ENCODE measurements at regions of chr20 and their contacts with region 1.

Region 1: DNA sequence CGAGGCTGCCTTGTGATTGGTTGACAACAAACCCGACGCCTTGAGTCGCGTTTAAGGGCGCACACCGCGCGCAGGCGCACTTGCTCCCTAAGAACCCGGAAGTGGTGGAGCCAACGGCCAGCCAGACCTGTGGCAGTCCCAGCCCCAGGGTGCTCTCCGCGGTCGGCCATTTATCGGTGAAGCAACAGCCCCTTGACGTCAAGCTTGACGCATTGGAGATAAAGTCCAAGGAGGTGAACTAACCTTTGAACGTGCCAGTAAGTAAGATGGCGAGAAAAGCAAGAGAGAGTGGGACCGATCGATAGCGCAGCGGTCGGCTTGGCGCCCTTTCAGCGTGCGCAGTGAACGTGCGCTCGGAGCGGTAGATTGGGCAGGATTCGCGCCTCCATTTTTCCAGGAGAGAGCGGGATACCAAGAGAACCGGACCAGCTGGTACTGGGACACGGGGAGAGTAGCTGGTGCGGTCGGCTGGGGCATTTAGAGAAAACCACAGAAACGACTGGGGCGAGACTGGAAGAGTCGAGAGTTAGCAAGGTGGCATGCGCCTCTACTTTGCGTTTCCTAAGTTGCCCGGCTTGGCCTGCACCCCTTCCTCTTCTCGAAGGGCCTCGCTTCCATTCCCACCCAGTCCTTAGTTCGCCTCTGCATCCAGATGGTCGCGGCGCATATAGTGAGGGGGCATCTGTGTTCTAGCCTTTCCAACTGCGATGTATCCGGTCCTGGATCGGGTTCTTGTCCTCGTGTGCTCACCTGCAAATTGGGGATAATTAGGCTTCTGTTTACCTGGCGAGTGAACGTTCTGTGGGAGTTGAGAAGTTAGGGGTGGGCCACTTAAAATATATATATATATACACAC is at the start of gene CSTF1:
- DNase-seq: peak; percentile 97 to 99 (median 99)
- ATAC-seq: peak; percentile 90 to 91
- H3K4me3 Mint-ChIP-seq: no peak within 1 kb of the TSS
- H3K27ac Mint-ChIP-seq: peak within 1 kb of the TSS in 1 of 10 donors; percentile 90
- H3K4me1 Mint-ChIP-seq: peaks cover 16 to 32% (median 24%) of the 10 kb centered on the region in 4 donors
- H3K27me3 Mint-ChIP-seq: no peaks in the 10 kb centered on the region
- polyA plus RNA-seq, gene CSTF1: 27.2 to 33.3 (median 27.7) TPM

Region 2: DNA sequence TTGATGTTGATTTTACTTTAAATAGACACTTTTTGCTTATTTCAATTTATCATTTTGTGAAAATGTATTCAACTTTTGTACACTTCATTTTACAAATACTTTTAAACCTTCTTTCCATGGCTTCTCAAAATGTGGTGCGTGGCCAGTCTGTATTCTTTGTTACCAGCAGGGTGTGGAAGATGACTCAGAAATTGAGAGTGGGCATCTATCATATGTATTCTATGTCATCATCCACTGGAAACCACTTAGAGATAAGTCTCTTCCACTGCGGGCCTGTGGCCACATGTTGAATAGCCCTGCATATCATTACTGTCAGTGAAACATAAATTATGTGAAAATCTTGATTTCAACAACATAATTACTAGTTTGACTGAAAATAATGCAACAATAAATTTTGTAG is 196.6 kb before region 1 on chr20:
- POLR2A ChIA-PET with region 1: no interaction called
- DNase-seq: no peak
- ATAC-seq: no peak
- H3K4me3 Mint-ChIP-seq: no peak overlapping the region
- H3K27ac Mint-ChIP-seq: no peak overlapping the region
- H3K4me1 Mint-ChIP-seq: no peaks in the 10 kb centered on the region
- H3K27me3 Mint-ChIP-seq: peaks cover 0 to 11% (median 2%) of the 10 kb centered on the region in 5 donors

Region 3: DNA sequence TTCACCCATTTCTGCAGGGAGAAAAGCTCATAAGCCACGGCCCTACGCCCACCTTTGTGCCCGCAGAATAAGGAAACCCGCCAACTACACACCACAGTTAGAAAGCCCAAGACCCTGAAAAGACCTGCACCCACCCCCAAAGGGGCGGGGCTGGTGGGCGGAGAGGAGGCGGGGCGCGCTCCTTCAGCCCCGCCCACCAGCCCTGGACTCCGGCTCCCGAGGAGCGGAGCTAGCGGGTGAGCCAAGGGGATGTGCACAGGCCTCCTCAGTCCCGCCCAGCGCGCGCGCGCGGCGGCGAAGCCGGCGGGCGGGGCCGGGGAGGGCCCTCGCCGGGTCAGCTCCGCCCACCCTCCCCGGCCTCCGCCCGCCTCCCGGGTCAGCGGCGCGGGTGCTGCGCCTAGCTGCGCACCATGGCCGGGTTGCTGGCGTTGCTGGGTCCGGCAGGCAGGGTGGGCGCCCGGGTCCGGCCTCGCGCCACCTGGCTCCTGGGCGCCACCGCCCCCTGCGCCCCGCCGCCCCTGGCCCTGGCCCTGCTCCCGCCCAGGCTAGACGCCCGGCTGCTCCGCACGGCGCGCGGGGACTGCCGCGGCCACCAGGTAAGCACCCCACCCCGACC is 33.8 kb before region 1 on chr20 and contains the start of gene FAM210B:
- POLR2A ChIA-PET with region 1: interaction called, 34 read pairs
- DNase-seq: peak; percentile 63 to 89 (median 76)
- ATAC-seq: peak; percentile 98
- H3K4me3 Mint-ChIP-seq: peak within 1 kb of the TSS; percentile 80 to 95 (median 92)
- H3K27ac Mint-ChIP-seq: peak within 1 kb of the TSS in 9 of 10 donors; percentile 65 to 92 (median 84)
- H3K4me1 Mint-ChIP-seq: peaks cover 8 to 27% (median 17%) of the 10 kb centered on the region in 4 donors
- H3K27me3 Mint-ChIP-seq: peaks cover 0 to 3% (median 0%) of the 10 kb centered on the region in 5 donors
- polyA plus RNA-seq, gene FAM210B: 26.7 to 32.9 (median 27.8) TPM

Region 4: GRCh38 chr20:56422076-56422823 is 29.7 kb after region 1 on chr20:
- POLR2A ChIA-PET with region 1: interaction called, 20 read pairs
- DNase-seq: no peak
- ATAC-seq: no peak
- H3K4me3 Mint-ChIP-seq: peak overlapping the region in 9 of 10 donors; percentile 37 to 75 (median 67)
- H3K27ac Mint-ChIP-seq: peak overlapping the region; percentile 86 to 99 (median 96)
- H3K4me1 Mint-ChIP-seq: peaks cover 39 to 79% (median 61%) of the 10 kb centered on the region in 4 donors
- H3K27me3 Mint-ChIP-seq: no peaks in the 10 kb centered on the region

Region 5: DNA sequence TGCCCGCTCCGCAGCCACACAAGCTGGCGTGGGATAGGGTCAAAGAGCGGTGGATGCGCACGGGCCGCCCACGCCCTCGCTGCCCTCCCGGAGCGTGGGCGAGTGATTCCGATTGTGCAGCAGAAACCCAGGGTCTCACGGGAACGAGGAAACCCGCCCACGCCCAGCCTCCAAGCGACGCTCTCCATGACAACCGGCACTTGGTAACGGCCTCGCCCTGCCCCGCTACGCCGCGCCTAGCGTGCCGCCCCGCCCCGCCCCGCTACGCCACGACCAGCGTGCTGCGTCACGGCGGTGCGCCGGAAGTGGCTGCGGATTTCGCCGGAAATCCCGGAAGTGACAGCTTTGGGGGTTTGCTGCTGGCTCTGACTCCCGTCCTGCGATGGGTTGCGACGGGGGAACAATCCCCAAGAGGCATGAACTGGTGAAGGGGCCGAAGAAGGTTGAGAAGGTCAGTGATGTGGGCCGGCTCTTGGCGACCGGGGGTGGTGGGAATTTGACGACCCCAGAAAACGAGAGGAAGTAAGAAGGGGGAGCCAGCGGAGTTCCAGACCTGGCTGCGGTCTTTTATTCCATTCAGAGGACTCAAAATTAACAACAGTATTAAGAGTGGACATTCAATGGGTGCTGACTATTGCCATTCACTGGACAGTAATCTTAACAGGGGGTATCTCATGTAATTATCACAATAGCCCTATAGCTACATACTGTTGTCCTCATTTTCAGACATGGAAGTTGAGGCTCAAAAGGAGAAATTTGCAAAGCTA is 76.0 kb after region 1 on chr20 and contains the start of gene RTF2:
- POLR2A ChIA-PET with region 1: interaction called, 13 read pairs
- DNase-seq: peak; percentile 94 to 99 (median 96)
- ATAC-seq: peak; percentile 96 to 97
- H3K4me3 Mint-ChIP-seq: peak within 1 kb of the TSS; percentile 96 to 100 (median 99)
- H3K27ac Mint-ChIP-seq: peak within 1 kb of the TSS; percentile 97 to 100 (median 100)
- H3K4me1 Mint-ChIP-seq: peaks cover 19 to 56% (median 45%) of the 10 kb centered on the region in 4 donors
- H3K27me3 Mint-ChIP-seq: no peaks in the 10 kb centered on the region
- polyA plus RNA-seq, gene RTF2: 121 to 147 (median 138) TPM